Activated CD4-positive, alpha-beta T cell treated with anti-CD3 and anti-CD28 coated beads for 36 hours (primary cell): ENCODE measurements at regions of chr1 and their contacts with region 1.

Region 1: DNA sequence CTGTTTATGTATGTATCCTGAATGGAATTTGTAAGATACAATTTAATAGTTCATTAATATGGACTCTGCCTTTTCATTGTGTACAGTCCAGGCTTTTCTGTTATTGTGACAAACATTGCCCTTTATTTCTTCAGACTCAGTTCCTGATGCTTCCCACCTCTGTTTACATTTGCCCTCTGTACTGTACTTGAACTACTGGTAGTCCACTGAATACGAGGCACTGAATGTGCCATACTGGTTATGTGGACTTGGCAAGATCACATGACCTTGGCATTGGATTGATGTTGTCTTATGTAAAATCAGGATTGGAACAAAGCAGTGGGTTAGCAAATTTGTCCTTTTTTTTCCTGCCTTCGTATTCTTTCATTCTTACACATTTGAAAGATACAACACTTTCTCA is 27.8 kb downstream of the RALGPS2 start:
- DNase-seq: no peak
- ATAC-seq: no peak
- H3K4me3 Mint-ChIP-seq: no peak overlapping the region
- H3K27ac Mint-ChIP-seq: no peak overlapping the region
- H3K4me1 Mint-ChIP-seq: peaks cover 3% of the 10 kb centered on the region
- H3K27me3 Mint-ChIP-seq: no peaks in the 10 kb centered on the region

Region 2: GRCh38 chr1:178532392-178532791 is 220.5 kb before region 1 on chr1:
- CTCF ChIA-PET with region 1: interaction called, 16 read pairs
- POLR2A ChIA-PET with region 1: no interaction called
- intact Hi-C with region 1: loop called in 1 of 2 experiments (anchors 2 kb)
- DNase-seq: peak; percentile 86
- ATAC-seq: peak; percentile 84
- H3K4me3 Mint-ChIP-seq: no peak overlapping the region
- H3K27ac Mint-ChIP-seq: no peak overlapping the region
- H3K4me1 Mint-ChIP-seq: no peaks in the 10 kb centered on the region
- H3K27me3 Mint-ChIP-seq: no peaks in the 10 kb centered on the region